ENCODE measurements at regions of chr9 and their contacts with region 1.

Region 1: GRCh38 chr9:87324613-87325194 is 173.0 kb upstream of the DAPK1 start:
- DNase-seq: no peak
- H3K4me3 Mint-ChIP-seq: no peak overlapping the region
- H3K27ac Mint-ChIP-seq: no peak overlapping the region
- H3K4me1 Mint-ChIP-seq: no peaks in the 10 kb centered on the region
- H3K27me3 Mint-ChIP-seq: peaks cover 15% of the 10 kb centered on the region

Region 2: DNA sequence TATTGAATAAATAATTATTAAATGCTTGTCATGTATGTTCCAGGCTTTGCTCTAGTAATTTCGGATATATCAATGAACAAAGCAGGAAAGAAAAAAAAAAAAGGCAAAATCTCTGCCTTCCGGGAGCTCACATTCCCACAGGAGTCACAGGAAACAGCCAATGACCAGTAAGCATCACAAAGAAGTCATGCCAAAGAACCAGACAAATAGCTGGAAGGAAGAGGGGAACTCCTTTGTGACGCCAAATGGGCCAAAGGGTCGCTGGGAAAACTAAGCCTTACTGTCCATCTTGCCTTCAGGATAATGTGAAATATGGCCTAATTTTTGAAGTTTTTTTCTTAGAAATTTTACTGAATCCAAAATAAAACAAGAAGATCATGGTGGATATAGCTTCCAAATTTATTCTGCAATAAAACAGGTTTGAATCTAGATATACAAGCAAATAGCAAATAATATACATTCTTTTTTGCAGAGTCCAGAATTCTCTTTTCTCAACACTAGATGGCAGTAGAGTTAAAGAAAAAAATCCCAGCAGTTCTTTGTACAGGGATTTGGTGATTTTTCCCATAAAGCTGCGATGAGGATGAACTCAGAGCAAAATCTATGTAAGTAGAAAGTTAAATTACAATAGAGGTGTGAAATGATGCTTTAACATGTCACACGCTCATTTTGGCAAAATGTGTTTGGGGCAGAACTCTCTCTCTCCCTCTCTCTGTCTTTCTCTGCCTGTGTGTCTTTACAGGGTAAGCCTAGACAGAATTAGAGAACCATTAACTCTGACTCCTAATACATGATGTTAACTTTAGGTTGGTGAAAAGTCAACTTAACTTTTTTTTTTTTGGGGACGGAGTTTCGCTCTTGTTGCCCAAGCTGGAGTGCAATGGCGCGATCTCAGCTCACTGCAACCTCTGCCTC is 910.5 kb before region 1 on chr9:
- CTCF ChIA-PET with region 1: interaction called, 4 read pairs
- intact Hi-C with region 1: loop called (anchors 1 kb)
- DNase-seq: no peak
- H3K4me3 Mint-ChIP-seq: no peak overlapping the region
- H3K27ac Mint-ChIP-seq: no peak overlapping the region
- H3K4me1 Mint-ChIP-seq: no peaks in the 10 kb centered on the region
- H3K27me3 Mint-ChIP-seq: peaks cover 4% of the 10 kb centered on the region

Region 3: GRCh38 chr9:86486891-86487837 is 837.5 kb before region 1 on chr9:
- CTCF ChIA-PET with region 1: interaction called, 4 read pairs
- intact Hi-C with region 1: loop called (anchors 1 kb)
- DNase-seq: no peak
- H3K4me3 Mint-ChIP-seq: no peak overlapping the region
- H3K27ac Mint-ChIP-seq: no peak overlapping the region
- H3K4me1 Mint-ChIP-seq: peaks cover 2% of the 10 kb centered on the region
- H3K27me3 Mint-ChIP-seq: no peaks in the 10 kb centered on the region

Region 4: GRCh38 chr9:86637515-86637914 is 687.2 kb before region 1 on chr9:
- CTCF ChIA-PET with region 1: no interaction called
- intact Hi-C with region 1: loop called (anchors 2 kb)
- DNase-seq: peak; percentile 29
- H3K4me3 Mint-ChIP-seq: no peak overlapping the region
- H3K27ac Mint-ChIP-seq: no peak overlapping the region
- H3K4me1 Mint-ChIP-seq: no peaks in the 10 kb centered on the region
- H3K27me3 Mint-ChIP-seq: peaks cover 34% of the 10 kb centered on the region